PC-3 (cell line): ENCODE measurements at regions of chr14 and their contacts with region 1.

Region 1: GRCh38 chr14:43135877-43136411 is 1371.1 kb downstream of the FSCB start:
- DNase-seq: no peak
- ATAC-seq: no peak
- H3K4me3 ChIP-seq: no peak overlapping the region
- H3K27ac ChIP-seq: no peak overlapping the region
- H3K4me1 ChIP-seq: no peaks in the 10 kb centered on the region
- H3K27me3 ChIP-seq: no peaks in the 10 kb centered on the region
- CTCF ChIP-seq: no peak

Region 2: GRCh38 chr14:41668356-41668755 is 1467.6 kb before region 1 on chr14:
- CTCF ChIA-PET with region 1: interaction called, 11 read pairs
- POLR2A ChIA-PET with region 1: no interaction called
- intact Hi-C with region 1: no loop called
- DNase-seq: no peak
- ATAC-seq: no peak
- H3K4me3 ChIP-seq: no peak overlapping the region
- H3K27ac ChIP-seq: no peak overlapping the region
- H3K4me1 ChIP-seq: no peaks in the 10 kb centered on the region
- H3K27me3 ChIP-seq: no peaks in the 10 kb centered on the region
- CTCF ChIP-seq: no peak